ENCODE measurements at regions of chr17 and their contacts with region 1.

Region 1: DNA sequence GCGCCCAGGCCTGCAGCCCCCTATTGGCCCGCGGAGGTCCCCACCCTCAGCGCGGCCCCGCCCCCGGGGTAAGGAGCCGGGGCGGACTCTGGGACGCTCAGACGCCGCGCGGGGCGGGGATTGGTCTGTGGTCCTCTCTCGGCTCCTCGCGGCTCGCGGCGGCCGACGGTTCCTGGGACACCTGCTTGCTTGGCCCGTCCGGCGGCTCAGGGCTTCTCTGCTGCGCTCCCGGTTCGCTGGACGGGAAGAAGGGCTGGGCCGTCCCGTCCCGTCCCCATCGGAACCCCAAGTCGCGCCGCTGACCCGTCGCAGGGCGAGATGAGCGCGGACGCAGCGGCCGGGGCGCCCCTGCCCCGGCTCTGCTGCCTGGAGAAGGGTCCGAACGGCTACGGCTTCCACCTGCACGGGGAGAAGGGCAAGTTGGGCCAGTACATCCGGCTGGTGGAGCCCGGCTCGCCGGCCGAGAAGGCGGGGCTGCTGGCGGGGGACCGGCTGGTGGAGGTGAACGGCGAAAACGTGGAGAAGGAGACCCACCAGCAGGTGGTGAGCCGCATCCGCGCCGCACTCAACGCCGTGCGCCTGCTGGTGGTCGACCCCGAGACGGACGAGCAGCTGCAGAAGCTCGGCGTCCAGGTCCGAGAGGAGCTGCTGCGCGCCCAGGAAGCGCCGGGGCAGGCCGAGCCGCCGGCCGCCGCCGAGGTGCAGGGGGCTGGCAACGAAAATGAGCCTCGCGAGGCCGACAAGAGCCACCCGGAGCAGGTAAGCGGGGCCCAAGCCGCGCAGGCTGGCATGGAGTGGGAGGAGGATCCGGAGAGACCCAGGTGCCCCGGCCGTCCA is at the start of gene NHERF1:
- DNase-seq: peak; percentile 95 to 97 (median 96)
- ATAC-seq: peak; percentile 96
- H3K4me3 ChIP-seq: peak within 1 kb of the TSS; percentile 93
- H3K27ac ChIP-seq: peak within 1 kb of the TSS; percentile 68
- H3K4me1 ChIP-seq: peaks cover 40 to 68% of the 10 kb centered on the region in 2 experiments
- H3K27me3 ChIP-seq: no peaks in the 10 kb centered on the region
- CTCF ChIP-seq: peak; percentile 22 to 78 (median 31); a peak in 4 of 6 replicates
- EP300 ChIP-seq: no peak
- POLR2A ChIP-seq: peak; percentile 89
- RAD21 ChIP-seq: peak in 1 of 2 experiments; percentile 27; a peak in 2 of 4 replicates
- polyA plus RNA-seq, gene NHERF1: 11.4 to 20.6 TPM

Region 2: DNA sequence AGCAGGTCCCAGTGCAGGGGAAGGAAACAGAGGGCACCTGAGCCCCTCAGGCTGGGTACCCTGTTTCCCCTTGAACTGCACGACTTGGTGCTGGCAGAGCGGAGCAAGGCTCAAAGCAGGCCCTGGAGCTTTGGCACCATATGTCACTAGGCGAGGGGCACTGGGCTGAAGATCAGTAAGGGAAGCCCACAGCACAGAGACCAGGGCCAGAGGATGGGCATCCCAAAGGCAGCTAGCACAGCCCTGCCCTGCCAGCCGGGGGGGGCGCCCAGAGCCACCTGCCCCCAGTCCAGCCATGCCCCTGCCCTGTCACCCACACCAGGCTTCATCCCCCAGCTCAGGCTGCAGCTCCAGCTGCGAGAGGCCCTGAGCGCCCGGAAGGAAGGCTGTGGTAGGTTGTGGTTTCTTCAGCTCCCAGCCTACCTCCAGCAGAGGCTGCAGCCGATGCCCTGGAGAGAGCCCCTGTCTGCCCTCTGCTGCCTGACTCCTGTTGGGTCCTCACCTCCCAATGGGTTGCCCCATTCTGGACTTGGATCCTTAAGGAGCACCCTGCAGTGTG is 10.6 kb after region 1 on chr17:
- CTCF ChIA-PET with region 1: no interaction called
- POLR2A ChIA-PET with region 1: interaction called, 22 read pairs
- in situ Hi-C with region 1: no loop called
- intact Hi-C with region 1: no loop called
- DNase-seq: no peak
- ATAC-seq: no peak
- H3K4me3 ChIP-seq: no peak overlapping the region
- H3K27ac ChIP-seq: peak overlapping the region; percentile 61; the same call in 2 of the 3 replicates
- H3K4me1 ChIP-seq: peaks cover 37 to 76% of the 10 kb centered on the region in 2 experiments
- H3K27me3 ChIP-seq: no peaks in the 10 kb centered on the region
- CTCF ChIP-seq: no peak
- EP300 ChIP-seq: no peak
- POLR2A ChIP-seq: no peak
- RAD21 ChIP-seq: no peak

Region 3: DNA sequence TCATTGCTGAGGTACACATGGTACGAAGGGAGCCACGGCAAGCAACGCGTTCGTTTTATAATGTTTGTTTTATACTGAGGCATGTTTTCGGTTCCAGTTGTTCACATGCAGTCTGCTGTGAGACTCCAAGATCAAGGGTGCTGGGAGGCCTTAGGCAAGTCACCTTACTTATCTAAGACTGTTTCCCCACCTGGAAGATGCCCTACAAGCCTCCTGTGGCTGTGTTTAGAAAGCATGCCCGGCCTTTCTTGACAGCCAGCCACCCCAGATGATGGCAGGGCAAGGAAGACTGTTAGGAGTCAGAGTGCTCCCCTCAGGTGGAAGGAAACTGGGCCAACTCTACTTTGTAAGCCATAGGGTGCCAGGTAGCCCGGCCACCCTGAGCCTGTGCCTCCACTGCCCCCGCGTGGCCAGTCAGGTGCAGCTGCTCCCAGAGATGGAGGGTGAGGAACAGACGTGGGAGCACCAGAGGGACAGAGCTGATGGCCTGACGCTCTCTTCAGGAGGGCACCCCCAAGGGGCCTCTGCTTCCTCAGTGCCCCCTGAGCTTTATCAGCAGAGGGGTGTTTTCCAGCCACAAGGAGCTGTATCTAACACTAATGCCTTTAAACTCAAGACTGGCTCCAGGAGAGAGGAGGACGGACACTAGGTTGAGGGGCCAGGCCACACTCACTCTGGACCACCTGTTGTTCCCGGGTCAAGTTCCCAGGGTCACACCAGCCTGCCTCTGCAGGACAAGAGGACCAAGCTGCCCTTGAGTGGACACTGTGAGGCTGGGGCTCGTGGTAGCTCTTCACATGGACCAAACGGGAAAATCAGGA is 22.0 kb after region 1 on chr17:
- CTCF ChIA-PET with region 1: interaction called, 41 read pairs
- POLR2A ChIA-PET with region 1: interaction called, 4 read pairs
- in situ Hi-C with region 1: no loop called
- intact Hi-C with region 1: loop called (anchors 1 kb)
- DNase-seq: peak; percentile 54 to 70 (median 62)
- ATAC-seq: peak; percentile 93
- H3K4me3 ChIP-seq: no peak overlapping the region
- H3K27ac ChIP-seq: no peak overlapping the region
- H3K4me1 ChIP-seq: peaks cover 0 to 12% of the 10 kb centered on the region in 2 experiments; a peak in 1 of 5 replicates
- H3K27me3 ChIP-seq: no peaks in the 10 kb centered on the region
- CTCF ChIP-seq: peak; percentile 83 to 90 (median 88)
- EP300 ChIP-seq: no peak
- POLR2A ChIP-seq: peak; percentile 27; the same call in 1 of the 2 replicates
- RAD21 ChIP-seq: peak; percentile 80 to 92

Region 4: DNA sequence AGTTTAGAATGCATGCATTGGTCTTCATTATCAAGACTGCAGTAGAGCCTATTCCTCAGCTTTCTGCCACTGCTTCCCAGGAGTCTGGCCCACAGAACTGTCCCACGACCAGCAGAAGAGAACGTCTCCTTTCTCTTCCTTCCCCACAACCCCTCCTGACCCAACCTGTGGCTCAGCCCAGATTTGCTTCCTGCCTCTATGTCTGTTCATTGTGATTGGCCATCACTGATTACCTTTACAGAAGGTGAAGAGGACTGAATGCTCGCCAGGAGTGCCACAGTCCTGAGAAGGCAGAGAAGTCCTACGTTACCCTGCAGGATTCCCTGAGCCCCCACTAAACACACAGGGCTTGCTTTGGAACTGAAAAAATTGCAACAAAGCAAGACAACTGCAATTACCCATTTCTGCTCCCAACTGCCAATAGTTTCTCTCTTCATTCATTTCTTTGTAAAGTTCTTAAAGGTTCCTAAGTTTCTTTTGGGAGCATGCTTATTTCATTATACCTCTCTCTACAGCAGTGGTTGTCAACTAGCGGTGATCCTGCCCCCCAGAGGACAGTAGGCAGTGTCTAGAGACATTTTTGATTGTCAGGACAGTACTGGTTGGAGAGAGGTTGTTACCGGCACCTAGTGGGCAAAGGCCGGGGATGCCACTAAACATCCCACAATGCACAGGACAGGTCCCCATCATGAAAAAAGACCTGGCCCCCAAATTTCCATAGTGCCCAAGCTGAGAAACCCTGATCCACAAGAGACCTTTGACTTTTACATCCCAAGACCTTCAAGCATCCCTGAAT is 31.9 kb after region 1 on chr17:
- CTCF ChIA-PET with region 1: interaction called, 14 read pairs
- POLR2A ChIA-PET with region 1: no interaction called
- in situ Hi-C with region 1: no loop called
- intact Hi-C with region 1: loop called (anchors 2 kb)
- DNase-seq: peak; percentile 49 to 67 (median 58)
- ATAC-seq: peak; percentile 75
- H3K4me3 ChIP-seq: no peak overlapping the region
- H3K27ac ChIP-seq: no peak overlapping the region
- H3K4me1 ChIP-seq: peaks cover 12 to 20% of the 10 kb centered on the region in 2 experiments; a peak in 4 of 5 replicates
- H3K27me3 ChIP-seq: no peaks in the 10 kb centered on the region
- CTCF ChIP-seq: peak; percentile 69 to 96 (median 92)
- EP300 ChIP-seq: no peak
- POLR2A ChIP-seq: no peak
- RAD21 ChIP-seq: peak; percentile 58 to 75

Region 5: GRCh38 chr17:74790161-74791054 is 41.7 kb after region 1 on chr17:
- CTCF ChIA-PET with region 1: interaction called, 13 read pairs
- POLR2A ChIA-PET with region 1: interaction called, 3 read pairs
- in situ Hi-C with region 1: no loop called
- intact Hi-C with region 1: no loop called
- DNase-seq: no peak
- ATAC-seq: no peak
- H3K4me3 ChIP-seq: no peak overlapping the region
- H3K27ac ChIP-seq: no peak overlapping the region
- H3K4me1 ChIP-seq: peaks cover 0 to 4% of the 10 kb centered on the region in 2 experiments; a peak in 1 of 5 replicates
- H3K27me3 ChIP-seq: no peaks in the 10 kb centered on the region
- CTCF ChIP-seq: no peak
- EP300 ChIP-seq: no peak
- POLR2A ChIP-seq: no peak
- RAD21 ChIP-seq: no peak

Region 6: GRCh38 chr17:74807925-74808324 is 59.2 kb after region 1 on chr17:
- CTCF ChIA-PET with region 1: no interaction called
- POLR2A ChIA-PET with region 1: no interaction called
- in situ Hi-C with region 1: no loop called
- intact Hi-C with region 1: no loop called
- DNase-seq: no peak
- ATAC-seq: no peak
- H3K4me3 ChIP-seq: no peak overlapping the region
- H3K27ac ChIP-seq: no peak overlapping the region
- H3K4me1 ChIP-seq: no peaks in the 10 kb centered on the region
- H3K27me3 ChIP-seq: no peaks in the 10 kb centered on the region
- CTCF ChIP-seq: no peak
- EP300 ChIP-seq: no peak
- POLR2A ChIP-seq: no peak
- RAD21 ChIP-seq: no peak

Region 7: GRCh38 chr17:74852237-74853047 is 103.7 kb after region 1 on chr17:
- CTCF ChIA-PET with region 1: no interaction called
- POLR2A ChIA-PET with region 1: no interaction called
- in situ Hi-C with region 1: no loop called
- intact Hi-C with region 1: loop called (anchors 5 kb)
- DNase-seq: peak; percentile 81 to 95 (median 92)
- ATAC-seq: peak; percentile 93
- H3K4me3 ChIP-seq: 0 out of 2 replicates have a peak overlapping the region, but pooled peaks have one; percentile 12
- H3K27ac ChIP-seq: no peak overlapping the region
- H3K4me1 ChIP-seq: peaks cover 0 to 33% of the 10 kb centered on the region in 2 experiments; a peak in 2 of 5 replicates
- H3K27me3 ChIP-seq: peaks cover 0 to 40% of the 10 kb centered on the region in 2 experiments; a peak in 2 of 5 replicates
- CTCF ChIP-seq: no peak
- EP300 ChIP-seq: no peak
- POLR2A ChIP-seq: no peak; the same call in 1 of the 2 replicates
- RAD21 ChIP-seq: no peak

Region 8: DNA sequence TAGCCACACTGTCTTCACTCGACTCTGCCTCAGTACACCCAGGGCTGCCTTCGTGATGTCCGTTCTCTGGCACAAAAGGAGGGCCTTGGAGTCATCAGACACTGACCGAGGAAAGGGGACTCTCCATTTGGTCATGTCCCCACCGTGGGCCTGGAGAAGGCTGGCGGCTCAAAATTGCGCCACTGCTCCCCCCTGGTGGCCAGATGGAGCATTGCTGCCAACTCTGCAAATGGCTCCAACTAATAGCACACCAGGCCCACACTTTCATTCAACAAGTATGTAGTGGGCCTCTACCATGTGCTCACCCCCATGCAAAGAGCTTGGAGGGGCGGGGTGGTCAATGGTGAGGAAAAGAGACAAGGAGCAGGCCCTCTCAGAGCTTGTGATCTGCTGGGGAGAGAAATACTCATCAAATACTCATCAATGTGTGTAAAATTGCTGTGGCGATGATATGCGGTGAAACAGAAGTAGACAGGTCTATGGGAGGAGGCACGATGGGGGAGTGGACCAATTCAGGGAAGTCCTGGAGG is 116.2 kb after region 1 on chr17:
- CTCF ChIA-PET with region 1: interaction called, 10 read pairs
- POLR2A ChIA-PET with region 1: interaction called, 5 read pairs
- in situ Hi-C with region 1: no loop called
- intact Hi-C with region 1: loop called (anchors 5 kb)
- DNase-seq: peak; percentile 57 to 83 (median 70)
- ATAC-seq: peak; percentile 74
- H3K4me3 ChIP-seq: no peak overlapping the region
- H3K27ac ChIP-seq: 0 out of 3 replicates have a peak overlapping the region, but pooled peaks have one; percentile 31
- H3K4me1 ChIP-seq: peaks cover 40 to 85% of the 10 kb centered on the region in 2 experiments
- H3K27me3 ChIP-seq: no peaks in the 10 kb centered on the region
- CTCF ChIP-seq: peak; percentile 90 to 98 (median 90)
- EP300 ChIP-seq: no peak
- POLR2A ChIP-seq: no peak
- RAD21 ChIP-seq: peak; percentile 71 to 85